PC-9 (cell line): ENCODE measurements at regions of chr11 and their contacts with region 1.

Region 1: DNA sequence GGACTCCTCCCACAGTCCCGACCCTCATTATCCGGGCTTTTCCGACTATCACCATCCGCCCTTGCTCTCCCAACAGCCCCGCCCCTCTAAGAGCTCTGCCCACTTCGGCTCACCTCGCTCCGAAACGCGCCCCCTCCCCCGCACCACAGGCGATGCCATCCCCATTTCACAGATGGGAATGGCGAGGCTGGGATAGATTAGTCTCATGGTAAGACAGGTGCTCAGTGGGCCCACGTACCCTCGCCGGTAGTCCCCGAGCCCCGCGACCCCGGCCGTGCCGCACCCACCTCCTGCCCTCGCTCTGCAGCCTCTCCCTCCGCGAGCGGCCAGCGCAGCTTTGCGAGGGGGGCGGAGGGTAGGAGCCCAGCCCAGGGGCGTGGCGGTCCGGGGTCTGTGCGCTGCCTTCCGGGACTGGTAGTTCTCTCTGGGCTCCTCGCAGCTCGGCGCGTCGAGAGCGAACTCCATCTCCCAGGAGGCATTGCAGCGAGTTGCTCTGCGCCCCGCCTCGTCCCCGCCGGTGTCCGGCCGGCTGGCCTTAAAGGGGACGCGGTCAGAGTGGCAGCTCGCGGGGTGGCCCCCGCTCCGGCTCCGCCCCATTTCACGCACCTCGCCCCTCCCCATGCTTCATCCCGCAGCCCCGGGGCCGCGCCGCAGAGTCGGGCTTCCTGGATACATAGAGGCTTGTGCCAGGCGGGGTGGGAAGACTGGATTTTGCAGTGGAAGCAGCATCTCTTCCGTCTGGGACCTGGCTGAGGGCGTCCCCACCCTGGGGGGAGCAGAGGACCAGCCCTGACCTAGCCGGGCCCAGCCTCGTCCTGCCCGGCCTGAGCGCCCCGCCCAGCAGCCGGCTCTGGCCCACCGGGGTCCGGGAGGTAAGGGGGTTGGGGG is at the starts of genes KCTD21 and USP35:
- DNase-seq: peak; percentile 97 to 99
- H3K4me3 ChIP-seq: peak within 1 kb of the TSS; percentile 80
- H3K27ac ChIP-seq: no peak within 1 kb of the TSS
- H3K4me1 ChIP-seq: peaks cover 43% of the 10 kb centered on the region
- H3K27me3 ChIP-seq: no peaks in the 10 kb centered on the region
- CTCF ChIP-seq: no peak
- total RNA-seq, gene KCTD21: 16.1 and 16.5 TPM in 2 replicates
- total RNA-seq, gene USP35: 12.8 and 13.5 TPM in 2 replicates

Region 2: GRCh38 chr11:77820563-77821348 is 367.8 kb before region 1 on chr11 and contains the starts of genes AAMDC and RSF1:
- CTCF ChIA-PET with region 1: no interaction called
- POLR2A ChIA-PET with region 1: interaction called, 4 read pairs
- intact Hi-C with region 1: loop called (anchors 5 kb)
- DNase-seq: peak; percentile 97 to 99
- H3K4me3 ChIP-seq: peak within 1 kb of the TSS; percentile 89
- H3K27ac ChIP-seq: peak within 1 kb of the TSS; percentile 55
- H3K4me1 ChIP-seq: peaks cover 38% of the 10 kb centered on the region
- H3K27me3 ChIP-seq: no peaks in the 10 kb centered on the region
- CTCF ChIP-seq: peak; percentile 85
- total RNA-seq, gene AAMDC: 39.8 and 59.3 TPM in 2 replicates
- total RNA-seq, gene RSF1: 110 and 124 TPM in 2 replicates

Region 3: GRCh38 chr11:78149646-78150045 is 38.9 kb before region 1 on chr11:
- CTCF ChIA-PET with region 1: no interaction called
- POLR2A ChIA-PET with region 1: no interaction called
- intact Hi-C with region 1: no loop called
- DNase-seq: peak in 1 of 2 experiments; percentile 84
- H3K4me3 ChIP-seq: no peak overlapping the region
- H3K27ac ChIP-seq: no peak overlapping the region
- H3K4me1 ChIP-seq: 0 out of 2 replicates have a peak, but pooled peaks cover 3% of the 10 kb centered on the region
- H3K27me3 ChIP-seq: no peaks in the 10 kb centered on the region
- CTCF ChIP-seq: peak; percentile 41; the same call in 1 of the 2 replicates